ENCODE measurements at regions of chr2 and their contacts with region 1.

Region 1: DNA sequence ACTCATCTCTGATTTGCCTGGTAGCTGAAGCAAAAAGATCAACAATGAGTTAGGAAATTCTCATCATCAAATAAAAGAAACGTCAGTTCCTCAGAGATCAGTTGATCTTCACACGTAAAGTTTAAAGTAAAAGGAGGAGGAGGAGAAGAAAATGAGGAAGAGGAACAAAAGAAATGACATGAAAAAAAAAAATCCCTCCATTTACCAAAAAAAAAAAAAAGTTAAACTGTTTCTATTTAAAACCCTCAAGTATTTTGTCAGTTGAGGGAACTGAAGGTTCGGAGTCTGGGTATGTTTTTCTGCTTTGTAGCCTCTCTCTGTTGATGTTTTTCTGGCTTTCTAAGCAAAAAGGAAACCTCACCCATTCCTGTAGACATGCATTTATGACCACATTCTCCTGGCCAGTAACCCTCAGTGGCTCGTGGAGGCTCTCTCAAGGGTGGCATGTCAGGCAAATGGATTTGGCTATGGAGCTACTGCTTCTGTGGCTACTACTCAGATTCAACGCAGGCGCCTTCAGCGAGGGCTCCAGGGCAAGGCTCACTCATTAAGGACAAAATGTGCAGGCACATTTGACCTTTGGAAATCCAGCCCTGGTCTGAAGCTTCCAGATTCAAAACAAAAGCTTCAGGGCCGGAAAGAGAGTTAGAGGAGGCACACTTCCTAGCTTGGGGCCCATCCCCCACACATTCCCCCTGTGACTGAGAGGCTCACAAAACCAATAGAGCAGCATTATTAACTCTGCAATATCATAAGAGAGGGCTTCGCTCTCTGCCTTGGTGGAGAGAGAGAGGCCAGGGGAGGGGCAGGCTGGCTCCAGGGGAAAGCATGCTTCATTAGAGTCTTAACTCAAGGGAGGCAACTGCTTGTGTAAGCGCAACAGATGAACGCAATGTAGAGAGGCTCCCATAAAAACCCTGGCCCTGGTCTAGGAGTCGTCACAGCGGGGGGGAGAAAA is 22.3 kb downstream of the KLF7 start:
- DNase-seq: no peak
- H3K4me3 ChIP-seq: no peak overlapping the region
- H3K27me3 ChIP-seq: no peaks in the 10 kb centered on the region
- CTCF ChIP-seq: no peak

Region 2: GRCh38 chr2:207123335-207123744 is 20.2 kb before region 1 on chr2:
- CTCF ChIA-PET with region 1: no interaction called
- POLR2A ChIA-PET with region 1: interaction called, 13 read pairs
- DNase-seq: no peak
- H3K4me3 ChIP-seq: no peak overlapping the region
- H3K27me3 ChIP-seq: no peaks in the 10 kb centered on the region
- CTCF ChIP-seq: no peak

Region 3: GRCh38 chr2:207375192-207375861 is 231.8 kb after region 1 on chr2:
- CTCF ChIA-PET with region 1: no interaction called
- POLR2A ChIA-PET with region 1: no interaction called
- DNase-seq: no peak
- H3K4me3 ChIP-seq: no peak overlapping the region
- H3K27me3 ChIP-seq: no peaks in the 10 kb centered on the region
- CTCF ChIP-seq: no peak